ENCODE measurements at regions of chr17 and their contacts with region 1.

Region 1: GRCh38 chr17:79839363-79840268 is at the start of gene CBX4:
- DNase-seq: peak; percentile 76 to 92 (median 88)
- ATAC-seq: peak; percentile 89
- H3K4me3 ChIP-seq: peak within 1 kb of the TSS; percentile 78
- H3K4me3 Mint-ChIP-seq: peak within 1 kb of the TSS; percentile 93 to 99 (median 96)
- H3K27ac ChIP-seq: peak within 1 kb of the TSS; percentile 78
- H3K27ac Mint-ChIP-seq: peak within 1 kb of the TSS; percentile 95 to 99 (median 97)
- H3K4me1 ChIP-seq: peaks cover 60 to 72% of the 10 kb centered on the region in 2 donors
- H3K4me1 Mint-ChIP-seq: peaks cover 11 to 58% (median 28%) of the 10 kb centered on the region in 7 donors
- H3K27me3 ChIP-seq: peaks cover 15 to 34% of the 10 kb centered on the region in 2 donors
- H3K27me3 Mint-ChIP-seq: peaks cover 13 to 34% (median 18%) of the 10 kb centered on the region in 5 donors
- total RNA-seq, gene CBX4: 37.7 to 134 (median 84.4) TPM

Region 2: GRCh38 chr17:79749156-79749815 is 90.3 kb before region 1 on chr17:
- CTCF ChIA-PET with region 1: interaction called, 3 read pairs
- POLR2A ChIA-PET with region 1: interaction called, 7 read pairs
- intact Hi-C with region 1: loop called (anchors 2 kb)
- DNase-seq: no peak
- ATAC-seq: no peak
- H3K4me3 ChIP-seq: no peak overlapping the region
- H3K4me3 Mint-ChIP-seq: no peak overlapping the region
- H3K27ac ChIP-seq: no peak overlapping the region
- H3K27ac Mint-ChIP-seq: no peak overlapping the region
- H3K4me1 ChIP-seq: peaks cover 0 to 25% of the 10 kb centered on the region in 2 donors
- H3K4me1 Mint-ChIP-seq: peaks cover 0 to 28% (median 21%) of the 10 kb centered on the region in 7 donors
- H3K27me3 ChIP-seq: peaks cover 0 to 19% of the 10 kb centered on the region in 2 donors
- H3K27me3 Mint-ChIP-seq: peaks cover 34 to 60% (median 42%) of the 10 kb centered on the region in 5 donors

Region 3: GRCh38 chr17:79803997-79804855 is 35.4 kb before region 1 on chr17:
- CTCF ChIA-PET with region 1: interaction called, 5 read pairs
- POLR2A ChIA-PET with region 1: interaction called, 17 read pairs
- intact Hi-C with region 1: no loop called
- DNase-seq: peak in 7 of 9 donors; percentile 38 to 70 (median 54)
- ATAC-seq: peak; percentile 67
- H3K4me3 ChIP-seq: peak overlapping the region; percentile 54
- H3K4me3 Mint-ChIP-seq: peak overlapping the region; percentile 51 to 78 (median 71)
- H3K27ac ChIP-seq: no peak overlapping the region
- H3K27ac Mint-ChIP-seq: peak overlapping the region; percentile 7 to 88 (median 75)
- H3K4me1 ChIP-seq: peaks cover 31 to 49% of the 10 kb centered on the region in 2 donors
- H3K4me1 Mint-ChIP-seq: peaks cover 20 to 59% (median 43%) of the 10 kb centered on the region in 7 donors
- H3K27me3 ChIP-seq: peaks cover 49 to 88% of the 10 kb centered on the region in 2 donors
- H3K27me3 Mint-ChIP-seq: peaks cover 67 to 87% (median 70%) of the 10 kb centered on the region in 5 donors

Region 4: GRCh38 chr17:79915850-79916430 is 76.3 kb after region 1 on chr17:
- CTCF ChIA-PET with region 1: interaction called, 5 read pairs
- POLR2A ChIA-PET with region 1: no interaction called
- intact Hi-C with region 1: loop called (anchors 2 to 10 kb)
- DNase-seq: peak in 4 of 9 donors; percentile 11 to 47 (median 30)
- ATAC-seq: peak; percentile 40
- H3K4me3 ChIP-seq: no peak overlapping the region
- H3K4me3 Mint-ChIP-seq: no peak overlapping the region
- H3K27ac ChIP-seq: no peak overlapping the region
- H3K27ac Mint-ChIP-seq: no peak overlapping the region
- H3K4me1 ChIP-seq: no peaks in the 10 kb centered on the region
- H3K4me1 Mint-ChIP-seq: peaks cover 0 to 5% (median 0%) of the 10 kb centered on the region in 7 donors
- H3K27me3 ChIP-seq: no peaks in the 10 kb centered on the region
- H3K27me3 Mint-ChIP-seq: peaks cover 0 to 14% (median 0%) of the 10 kb centered on the region in 5 donors

Region 5: DNA sequence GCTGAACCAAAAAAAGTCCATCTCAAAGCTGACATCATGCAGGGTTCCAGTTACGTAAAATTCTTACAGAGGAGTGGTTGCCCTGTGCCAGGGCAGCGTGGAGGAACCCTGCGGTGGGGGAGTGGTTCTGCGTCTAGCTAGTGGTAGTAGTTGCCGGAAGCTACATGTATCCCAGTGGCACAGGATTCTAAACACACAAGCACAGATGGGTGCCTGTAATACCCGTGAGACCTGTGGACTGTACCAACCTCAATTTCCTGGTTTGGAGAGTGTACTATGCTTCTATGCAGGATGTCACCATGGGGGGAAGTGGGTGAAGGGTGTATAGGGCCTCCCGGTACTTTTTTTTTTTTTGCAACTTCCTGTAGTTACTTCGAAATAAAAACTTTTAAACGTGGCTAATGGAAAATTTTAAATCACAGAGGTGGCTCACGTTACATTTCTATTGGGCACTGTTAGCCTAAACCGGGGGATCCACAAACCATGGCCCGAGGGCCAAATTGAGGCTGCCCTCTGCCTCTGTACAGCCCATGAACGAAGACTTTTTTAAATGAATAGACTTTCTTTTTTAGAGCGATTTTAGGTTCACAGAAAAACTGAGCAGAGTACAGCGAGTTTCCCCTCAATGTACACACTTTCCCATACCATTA is 157.5 kb after region 1 on chr17:
- CTCF ChIA-PET with region 1: interaction called, 5 read pairs
- POLR2A ChIA-PET with region 1: interaction called, 9 read pairs
- intact Hi-C with region 1: loop called (anchors 1 to 5 kb)
- DNase-seq: peak; percentile 46 to 96 (median 93)
- ATAC-seq: peak; percentile 97
- H3K4me3 ChIP-seq: peak overlapping the region; percentile 50
- H3K4me3 Mint-ChIP-seq: peak overlapping the region; percentile 72 to 88 (median 82)
- H3K27ac ChIP-seq: peak overlapping the region; percentile 85
- H3K27ac Mint-ChIP-seq: peak overlapping the region; percentile 92 to 99 (median 97)
- H3K4me1 ChIP-seq: peaks cover 39 to 45% of the 10 kb centered on the region in 2 donors
- H3K4me1 Mint-ChIP-seq: peaks cover 29 to 63% (median 46%) of the 10 kb centered on the region in 7 donors
- H3K27me3 ChIP-seq: no peaks in the 10 kb centered on the region
- H3K27me3 Mint-ChIP-seq: no peaks in the 10 kb centered on the region

Region 6: DNA sequence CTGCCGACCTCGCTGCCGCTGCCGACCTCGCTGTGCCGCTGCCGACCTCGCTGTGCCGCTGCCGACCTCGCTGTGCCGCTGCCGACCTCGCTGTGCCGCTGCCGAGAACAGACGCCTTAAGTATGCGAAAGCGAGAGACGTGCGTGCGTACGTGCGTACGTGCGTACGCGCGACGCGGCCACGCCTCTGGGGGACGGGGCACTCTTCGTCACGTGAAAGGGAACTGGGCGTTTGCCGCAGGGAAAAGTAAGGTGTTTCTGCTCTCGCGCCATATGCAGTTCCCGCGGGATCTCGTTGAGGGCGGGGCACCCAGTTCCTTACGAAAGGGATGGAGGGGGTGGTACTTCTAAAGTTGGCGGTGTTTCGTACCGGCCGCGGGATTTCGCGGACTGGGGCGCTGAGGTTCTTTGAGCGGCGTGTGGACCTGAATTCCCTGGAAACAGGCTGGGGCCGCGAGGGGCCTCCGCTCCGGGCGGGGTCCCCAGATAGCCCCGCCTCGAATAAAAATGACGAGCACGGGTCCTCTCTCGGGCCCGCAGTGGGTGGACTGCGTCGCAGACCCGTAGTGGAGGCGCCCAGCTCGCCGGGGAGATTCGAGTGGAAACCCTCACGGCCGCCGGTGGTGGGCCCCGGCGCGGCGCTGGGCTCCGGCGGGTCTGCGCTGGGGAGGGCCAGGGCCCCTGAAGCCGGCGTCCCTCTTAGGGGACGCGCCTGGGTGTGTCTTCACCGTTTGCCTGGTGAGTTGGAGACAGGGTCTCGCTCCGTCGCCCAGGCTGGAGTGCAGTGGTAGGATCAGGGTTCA is 307.6 kb after region 1 on chr17 and contains the start of gene EIF4A3:
- CTCF ChIA-PET with region 1: no interaction called
- POLR2A ChIA-PET with region 1: no interaction called
- intact Hi-C with region 1: loop called in 1 of 2 experiments (anchors 5 kb)
- DNase-seq: peak; percentile 84 to 98 (median 96)
- ATAC-seq: peak; percentile 97
- H3K4me3 ChIP-seq: peak within 1 kb of the TSS; percentile 64
- H3K4me3 Mint-ChIP-seq: peak within 1 kb of the TSS; percentile 81 to 100 (median 98)
- H3K27ac ChIP-seq: peak within 1 kb of the TSS; percentile 91
- H3K27ac Mint-ChIP-seq: peak within 1 kb of the TSS; percentile 68 to 100 (median 97)
- H3K4me1 ChIP-seq: peaks cover 19 to 21% of the 10 kb centered on the region in 2 donors
- H3K4me1 Mint-ChIP-seq: peaks cover 15 to 59% (median 44%) of the 10 kb centered on the region in 7 donors
- H3K27me3 ChIP-seq: no peaks in the 10 kb centered on the region
- H3K27me3 Mint-ChIP-seq: no peaks in the 10 kb centered on the region
- total RNA-seq, gene EIF4A3: 48.6 to 128 (median 75.9) TPM

Measured in naive thymus-derived CD4-positive, alpha-beta T cell (primary cell).